Mammary epithelial cell (primary cell): ENCODE measurements at regions of chr12 and their contacts with region 1.

Region 1: GRCh38 chr12:39103552-39104165 is 198.3 kb upstream of the CPNE8 start:
- DNase-seq: peak; percentile 66
- H3K4me3 ChIP-seq: no peak overlapping the region
- H3K27ac ChIP-seq: no peak overlapping the region
- H3K4me1 ChIP-seq: peaks cover 8% of the 10 kb centered on the region
- H3K27me3 ChIP-seq: no peaks in the 10 kb centered on the region
- CTCF ChIP-seq: peak; percentile 75 to 76

Region 2: DNA sequence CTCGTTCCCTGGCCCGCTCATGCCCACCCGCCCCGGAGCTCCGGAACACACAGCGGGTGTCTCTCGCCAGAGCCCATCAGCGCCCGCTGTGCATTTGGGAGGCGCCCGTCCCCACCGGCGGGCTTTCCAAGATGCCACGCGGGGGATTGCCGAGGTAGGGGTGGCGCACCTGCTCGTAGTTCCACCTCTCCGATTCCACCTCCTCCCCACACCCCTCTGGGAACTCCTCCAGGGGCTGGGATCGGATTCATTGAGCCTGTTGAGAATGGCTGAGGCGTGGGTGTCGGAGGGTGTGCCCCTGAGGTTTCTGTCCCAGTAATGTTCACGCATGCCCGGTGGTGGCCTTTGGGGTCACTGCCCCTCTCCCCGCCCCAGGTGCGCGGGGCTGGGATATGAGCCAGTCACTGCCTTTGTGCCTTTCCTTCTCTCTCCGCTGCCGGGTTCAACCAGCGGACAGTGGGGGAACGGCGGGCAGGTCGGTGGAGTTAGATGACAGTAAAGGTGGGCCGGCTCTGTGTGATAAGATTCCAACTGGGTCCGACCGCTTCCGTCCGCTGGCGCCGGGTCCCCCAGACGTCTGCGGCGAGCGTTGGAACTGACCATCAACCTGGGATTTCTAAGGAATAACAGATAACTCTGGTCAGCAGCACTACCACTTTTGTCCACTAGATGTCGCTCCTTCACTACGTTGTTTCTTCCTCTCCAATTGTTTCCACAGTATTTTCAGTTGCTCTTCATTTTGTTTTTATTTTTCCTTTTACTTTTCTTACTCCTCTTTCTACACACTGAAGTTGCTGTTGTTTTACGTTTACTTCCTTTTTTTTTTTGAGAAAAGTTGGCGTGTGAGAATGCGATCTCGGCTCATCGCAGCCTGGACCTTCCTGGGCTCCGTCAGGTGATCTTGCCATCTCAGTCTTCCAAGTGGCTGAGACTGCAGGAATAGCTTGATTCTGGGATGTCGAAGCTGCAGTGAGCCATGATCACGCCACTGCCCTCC is 965.1 kb before region 1 on chr12:
- CTCF ChIA-PET with region 1: no interaction called
- dilution Hi-C with region 1: no loop called
- in situ Hi-C with region 1: no loop called
- intact Hi-C with region 1: loop called (anchors 1 kb)
- DNase-seq: peak; percentile 64
- H3K4me3 ChIP-seq: peak overlapping the region; percentile 61 to 87 (median 78)
- H3K27ac ChIP-seq: peak overlapping the region; percentile 52
- H3K4me1 ChIP-seq: no peaks in the 10 kb centered on the region
- H3K27me3 ChIP-seq: no peaks in the 10 kb centered on the region
- CTCF ChIP-seq: peak; percentile 89 to 98

Region 3: GRCh38 chr12:38384816-38385378 is 718.8 kb before region 1 on chr12:
- CTCF ChIA-PET with region 1: no interaction called
- dilution Hi-C with region 1: no loop called
- in situ Hi-C with region 1: no loop called
- intact Hi-C with region 1: loop called (anchors 5 kb)
- DNase-seq: peak; percentile 98
- H3K4me3 ChIP-seq: no peak overlapping the region
- H3K27ac ChIP-seq: peak overlapping the region; percentile 32
- H3K4me1 ChIP-seq: peaks cover 8% of the 10 kb centered on the region
- H3K27me3 ChIP-seq: no peaks in the 10 kb centered on the region
- CTCF ChIP-seq: peak in 1 of 2 donors; percentile 32

Region 4: GRCh38 chr12:38906482-38907170 is 197.0 kb before region 1 on chr12:
- CTCF ChIA-PET with region 1: interaction called, 26 read pairs
- dilution Hi-C with region 1: no loop called
- in situ Hi-C with region 1: loop called in 1 of 2 experiments (anchors 10 kb)
- intact Hi-C with region 1: loop called (anchors 1 kb)
- DNase-seq: peak; percentile 91
- H3K4me3 ChIP-seq: peak overlapping the region; percentile 63 to 86 (median 72)
- H3K27ac ChIP-seq: peak overlapping the region; percentile 72
- H3K4me1 ChIP-seq: peaks cover 13% of the 10 kb centered on the region
- H3K27me3 ChIP-seq: no peaks in the 10 kb centered on the region
- CTCF ChIP-seq: peak; percentile 83 to 96

Region 5: DNA sequence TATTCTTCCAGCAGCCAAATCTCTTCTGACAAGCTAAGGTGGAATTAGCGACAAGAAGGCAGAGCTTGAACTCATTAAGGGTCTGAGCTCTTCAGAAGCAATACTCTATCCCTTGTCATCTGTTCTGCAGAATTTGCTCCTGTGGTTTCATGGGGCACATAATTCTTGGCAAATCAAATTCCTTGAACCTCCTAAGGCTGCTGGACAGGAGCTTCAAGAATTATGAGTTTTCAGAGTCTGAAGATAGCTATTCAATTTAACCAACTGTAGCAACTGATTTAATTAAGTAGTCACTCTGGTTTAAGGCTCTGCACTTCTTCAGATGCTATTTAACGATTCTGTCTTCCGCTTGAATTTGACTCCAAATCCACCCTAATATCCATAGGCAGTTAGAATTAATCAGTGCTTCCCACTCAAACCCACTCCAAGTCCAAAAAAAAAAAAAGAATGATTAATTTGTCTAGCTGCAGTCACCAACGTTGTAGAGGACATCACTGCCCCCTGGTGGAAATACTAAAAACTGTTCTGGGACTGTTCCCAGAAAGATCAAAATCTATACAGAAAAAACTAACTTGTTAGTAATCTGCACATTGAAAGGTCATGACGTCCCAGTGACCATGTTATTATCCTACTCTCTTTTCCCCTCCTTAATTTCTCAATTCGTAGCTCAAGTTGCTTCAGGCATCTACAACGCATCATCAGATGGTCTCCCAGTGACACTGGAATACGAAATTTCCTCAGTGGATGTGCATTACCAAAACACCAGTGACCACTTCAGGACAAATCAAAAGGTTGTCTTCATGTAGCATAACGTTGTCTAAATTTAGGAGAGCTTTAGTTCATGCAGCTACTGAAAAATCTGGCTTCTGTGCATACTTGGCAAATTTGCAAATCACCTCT is 169.5 kb after region 1 on chr12:
- CTCF ChIA-PET with region 1: interaction called, 4 read pairs
- dilution Hi-C with region 1: no loop called
- in situ Hi-C with region 1: no loop called
- intact Hi-C with region 1: loop called (anchors 1 kb)
- DNase-seq: peak; percentile 35
- H3K4me3 ChIP-seq: no peak overlapping the region
- H3K27ac ChIP-seq: no peak overlapping the region
- H3K4me1 ChIP-seq: no peaks in the 10 kb centered on the region
- H3K27me3 ChIP-seq: no peaks in the 10 kb centered on the region
- CTCF ChIP-seq: peak; percentile 58 to 70